Naive thymus-derived CD8-positive, alpha-beta T cell (primary cell): ENCODE measurements at regions of chr19 and their contacts with region 1.

Region 1: DNA sequence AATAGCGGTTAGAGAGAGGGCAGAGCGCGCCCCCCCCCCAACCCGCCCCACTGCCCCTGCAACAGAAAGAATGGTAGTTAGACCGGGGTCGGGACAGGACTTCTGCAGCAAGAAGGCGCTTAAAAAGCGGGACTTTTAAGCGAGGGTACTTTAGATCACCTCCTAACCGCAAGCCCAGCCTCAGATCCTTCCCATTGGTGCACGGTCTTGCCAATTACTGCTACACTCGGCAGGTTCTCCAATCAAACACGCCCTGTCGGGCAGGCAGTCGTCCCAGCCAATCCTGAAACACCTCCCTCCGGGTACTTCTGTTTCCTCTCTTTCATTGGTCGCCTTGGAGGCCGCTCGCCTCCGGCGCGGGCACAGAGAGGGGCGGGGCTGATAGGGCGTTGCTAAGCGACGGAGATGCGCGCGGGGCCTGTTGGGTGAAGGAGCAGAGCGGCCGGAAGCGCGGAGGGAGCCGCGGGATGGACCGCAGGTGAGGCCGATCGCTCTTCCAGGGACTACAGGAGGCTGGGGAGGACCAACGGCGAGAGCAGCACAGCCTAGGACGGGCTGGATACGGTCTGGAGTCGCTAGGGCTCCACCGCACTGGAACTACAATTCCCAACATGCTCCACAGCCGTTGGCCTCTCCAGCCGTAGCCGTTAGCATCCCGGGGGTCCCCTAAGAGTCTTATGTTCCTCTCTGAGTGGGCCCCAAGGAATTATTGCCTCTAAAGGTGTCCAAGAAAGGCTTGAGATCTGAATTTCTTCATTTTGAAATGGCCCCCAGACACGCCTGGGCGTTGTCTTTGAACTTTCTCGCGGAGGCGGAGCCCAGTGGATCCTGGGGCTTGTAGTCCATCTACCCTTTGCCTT is at the start of gene PROSER3:
- DNase-seq: peak; percentile 91 to 100 (median 99)
- ATAC-seq: peak; percentile 97
- H3K4me3 Mint-ChIP-seq: peak within 1 kb of the TSS; percentile 90 to 99 (median 98)
- H3K27ac Mint-ChIP-seq: peak within 1 kb of the TSS; percentile 93 to 98 (median 96)
- H3K4me1 Mint-ChIP-seq: peaks cover 18 to 41% (median 40%) of the 10 kb centered on the region in 4 donors
- H3K27me3 Mint-ChIP-seq: peaks cover 2 to 12% (median 9%) of the 10 kb centered on the region in 5 donors
- polyA plus RNA-seq, gene PROSER3: 3.4 to 7.4 (median 5.8) TPM

Region 2: GRCh38 chr19:35740423-35741202 is 17.4 kb before region 1 on chr19:
- POLR2A ChIA-PET with region 1: interaction called, 36 read pairs
- DNase-seq: peak; percentile 88 to 97 (median 94)
- ATAC-seq: peak; percentile 65 to 68
- H3K4me3 Mint-ChIP-seq: peak overlapping the region; percentile 91 to 99 (median 96)
- H3K27ac Mint-ChIP-seq: peak overlapping the region; percentile 88 to 99 (median 94)
- H3K4me1 Mint-ChIP-seq: peaks cover 29 to 66% (median 59%) of the 10 kb centered on the region in 4 donors
- H3K27me3 Mint-ChIP-seq: no peaks in the 10 kb centered on the region